ENCODE measurements at regions of chr11 and their contacts with region 1.

Region 1: DNA sequence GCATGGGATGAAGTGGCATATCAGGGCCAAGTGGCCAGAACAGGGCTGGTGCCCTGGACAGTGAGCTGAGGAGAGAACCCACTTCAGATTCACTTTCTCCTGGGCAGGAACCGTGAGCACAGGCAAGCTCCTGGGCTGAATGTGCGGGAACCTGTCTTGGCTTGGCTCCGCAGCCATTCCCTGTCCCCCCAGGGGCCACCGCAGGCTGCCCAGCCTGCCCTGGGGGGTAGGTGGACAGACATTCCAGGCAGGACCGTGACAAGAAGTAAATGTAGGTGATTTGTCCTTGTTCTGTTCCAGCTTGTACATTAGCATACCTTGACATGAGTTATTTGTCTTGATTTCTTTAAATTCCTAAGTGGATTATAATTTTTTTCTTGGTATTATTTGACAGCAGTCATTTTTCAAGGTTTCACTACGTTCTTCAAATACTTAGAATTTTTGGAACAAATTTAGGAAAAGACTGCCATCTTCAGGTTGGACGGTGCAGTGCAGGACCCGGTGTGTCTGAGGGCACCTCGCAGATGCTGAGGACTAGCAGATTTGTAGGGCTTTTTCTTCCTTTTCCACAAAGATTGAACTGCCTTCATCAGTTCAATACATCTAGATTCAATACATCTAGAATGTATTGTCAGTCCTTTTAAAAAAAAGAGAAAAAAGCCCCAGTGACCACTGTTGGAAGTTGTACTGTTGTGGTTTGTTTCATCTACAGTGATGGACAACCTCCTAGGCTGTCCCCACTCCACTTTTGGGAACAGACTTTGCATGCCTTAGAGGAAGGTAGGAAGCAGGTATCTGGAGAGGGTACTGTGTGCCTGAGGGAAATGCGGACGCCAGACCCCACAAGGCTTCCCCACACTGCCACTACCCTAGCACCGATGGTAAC is 115.1 kb upstream of the RASSF10 start:
- DNase-seq: peak; percentile 69
- H3K4me3 ChIP-seq: no peak overlapping the region
- H3K27ac ChIP-seq: no peak overlapping the region
- H3K4me1 ChIP-seq: no peaks in the 10 kb centered on the region
- H3K27me3 ChIP-seq: no peaks in the 10 kb centered on the region
- CTCF ChIP-seq: peak; percentile 72 to 96
- POLR2A ChIP-seq: no peak

Region 2: DNA sequence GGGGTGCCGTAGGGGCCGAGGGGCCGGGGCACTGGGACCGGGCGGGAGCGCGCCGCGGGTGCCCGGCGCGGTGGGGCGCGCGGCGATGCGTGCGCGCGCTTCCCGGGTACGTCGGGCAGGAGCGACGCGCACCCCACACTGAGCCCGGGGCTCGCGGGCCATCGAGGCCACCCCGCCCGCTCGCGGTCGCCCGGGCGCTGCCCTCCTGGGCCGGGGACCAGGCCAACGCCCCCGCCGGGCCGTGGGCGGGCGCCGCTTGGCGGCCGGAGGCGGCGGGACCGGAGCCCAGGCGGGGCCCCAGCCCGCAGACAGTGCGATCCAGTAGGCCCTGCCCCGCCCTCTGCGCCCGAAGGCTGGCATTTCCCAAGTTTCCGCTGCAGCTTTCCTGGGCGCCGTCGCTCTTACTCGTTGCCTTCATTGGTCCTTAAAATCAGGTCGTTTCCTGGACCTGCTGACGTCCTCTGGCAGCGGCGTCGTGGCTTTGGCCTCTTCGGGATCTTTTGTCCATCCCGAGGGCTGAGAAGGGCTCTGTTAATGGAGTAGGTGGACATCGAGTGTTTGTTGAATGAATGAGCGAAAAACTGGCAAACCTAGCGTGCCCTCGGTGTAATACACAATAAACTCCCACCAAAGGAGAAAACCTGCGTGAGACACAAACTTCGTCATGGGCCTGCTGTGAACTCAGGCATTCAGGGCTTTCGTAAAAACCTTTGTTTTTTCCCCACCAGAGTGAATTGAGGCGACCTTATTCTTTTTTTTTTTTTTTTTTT is 516.0 kb before region 1 on chr11:
- CTCF ChIA-PET with region 1: interaction called, 9 read pairs
- POLR2A ChIA-PET with region 1: no interaction called
- dilution Hi-C with region 1: no loop called
- intact Hi-C with region 1: loop called (anchors 1 kb)
- DNase-seq: peak; percentile 69
- H3K4me3 ChIP-seq: peak overlapping the region; percentile 72 to 82 (median 78)
- H3K27ac ChIP-seq: peak overlapping the region; percentile 95
- H3K4me1 ChIP-seq: peaks cover 16% of the 10 kb centered on the region
- H3K27me3 ChIP-seq: no peaks in the 10 kb centered on the region
- CTCF ChIP-seq: peak; percentile 12 to 23
- POLR2A ChIP-seq: no peak

Region 3: GRCh38 chr11:12411806-12412727 is 482.0 kb before region 1 on chr11:
- CTCF ChIA-PET with region 1: interaction called, 22 read pairs
- POLR2A ChIA-PET with region 1: no interaction called
- dilution Hi-C with region 1: no loop called
- intact Hi-C with region 1: loop called (anchors 1 kb)
- DNase-seq: peak; percentile 82
- H3K4me3 ChIP-seq: no peak overlapping the region
- H3K27ac ChIP-seq: peak overlapping the region; percentile 85
- H3K4me1 ChIP-seq: peaks cover 17% of the 10 kb centered on the region
- H3K27me3 ChIP-seq: no peaks in the 10 kb centered on the region
- CTCF ChIP-seq: peak; percentile 88 to 90
- POLR2A ChIP-seq: peak; percentile 19

Region 4: GRCh38 chr11:12485328-12485727 is 408.7 kb before region 1 on chr11:
- CTCF ChIA-PET with region 1: interaction called, 3 read pairs
- POLR2A ChIA-PET with region 1: no interaction called
- dilution Hi-C with region 1: no loop called
- intact Hi-C with region 1: loop called (anchors 5 kb)
- DNase-seq: peak; percentile 14
- H3K4me3 ChIP-seq: no peak overlapping the region
- H3K27ac ChIP-seq: no peak overlapping the region
- H3K4me1 ChIP-seq: no peaks in the 10 kb centered on the region
- H3K27me3 ChIP-seq: no peaks in the 10 kb centered on the region
- CTCF ChIP-seq: peak; percentile 31 to 37
- POLR2A ChIP-seq: no peak

Region 5: DNA sequence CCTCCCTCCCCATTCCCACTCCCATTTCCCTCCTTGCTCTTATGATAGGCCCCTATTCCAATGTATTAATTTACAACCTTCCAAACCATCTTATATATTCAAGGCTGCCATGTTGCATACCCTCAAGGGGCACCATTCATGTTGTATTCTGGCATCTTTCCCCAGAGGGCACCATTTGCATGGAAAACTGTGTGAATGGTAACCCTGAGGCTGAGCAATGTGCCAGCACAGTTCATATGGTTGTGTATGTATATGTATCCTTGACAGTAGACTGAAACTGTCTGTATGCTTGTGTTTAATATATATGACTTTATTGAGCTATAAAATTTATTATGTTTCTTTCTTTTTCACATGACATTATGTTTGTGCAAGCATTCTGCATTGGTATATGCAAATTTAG is 122.4 kb after region 1 on chr11:
- CTCF ChIA-PET with region 1: no interaction called
- POLR2A ChIA-PET with region 1: no interaction called
- dilution Hi-C with region 1: no loop called
- intact Hi-C with region 1: no loop called
- DNase-seq: peak; percentile 37
- H3K4me3 ChIP-seq: no peak overlapping the region
- H3K27ac ChIP-seq: no peak overlapping the region
- H3K4me1 ChIP-seq: no peaks in the 10 kb centered on the region
- H3K27me3 ChIP-seq: peaks cover 28 to 60% of the 10 kb centered on the region in 2 experiments
- CTCF ChIP-seq: no peak
- POLR2A ChIP-seq: no peak

Region 6: DNA sequence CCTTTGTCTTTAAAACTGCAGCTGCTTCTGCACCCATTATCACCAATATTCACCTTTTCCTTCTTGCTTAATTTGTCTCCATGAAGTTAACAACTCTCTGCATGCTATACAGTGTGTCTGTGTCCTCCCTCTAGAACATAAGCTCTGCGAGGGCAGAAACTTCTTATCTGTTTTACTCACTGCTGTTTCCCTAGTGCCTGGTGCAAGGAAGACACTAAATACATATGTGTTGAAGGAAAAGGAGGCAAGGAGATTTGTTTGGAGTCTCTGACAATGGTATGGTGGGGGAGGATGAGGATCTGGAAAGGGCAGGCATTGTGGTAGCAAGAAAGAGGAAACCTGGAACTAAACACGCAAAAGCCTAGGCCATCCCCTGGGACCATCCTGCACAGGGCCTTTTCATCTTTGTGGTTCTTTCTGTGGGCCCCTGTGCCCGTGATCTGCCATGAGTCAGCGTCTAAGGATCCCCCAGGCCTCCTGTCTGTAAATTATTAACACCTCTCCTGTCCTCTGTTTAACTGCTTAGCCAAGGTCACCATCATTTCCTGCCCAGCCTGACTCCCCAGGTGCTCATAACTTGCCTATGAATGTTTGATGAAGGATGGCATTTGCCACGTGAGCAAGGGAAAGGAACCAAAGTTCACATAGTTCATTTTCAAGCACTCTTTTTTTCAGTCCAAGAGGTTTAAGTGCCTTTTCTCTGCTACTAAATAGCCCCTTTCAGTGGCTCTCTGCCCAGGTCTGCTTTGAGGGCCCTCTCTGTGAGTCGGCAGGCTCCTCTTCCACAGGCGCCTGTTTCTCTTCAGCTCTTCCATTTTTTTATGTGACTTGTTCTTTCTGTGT is 246.2 kb after region 1 on chr11:
- CTCF ChIA-PET with region 1: no interaction called
- POLR2A ChIA-PET with region 1: no interaction called
- dilution Hi-C with region 1: no loop called
- intact Hi-C with region 1: no loop called
- DNase-seq: no peak
- H3K4me3 ChIP-seq: no peak overlapping the region
- H3K27ac ChIP-seq: no peak overlapping the region
- H3K4me1 ChIP-seq: peaks cover 14% of the 10 kb centered on the region
- H3K27me3 ChIP-seq: no peaks in the 10 kb centered on the region
- CTCF ChIP-seq: no peak
- POLR2A ChIP-seq: no peak

Measured in endothelial cell of umbilical vein (primary cell).